Right ventricle myocardium superior (tissue), 1 donor: ENCODE measurements at regions of chr6 and their contacts with region 1.

Region 1: DNA sequence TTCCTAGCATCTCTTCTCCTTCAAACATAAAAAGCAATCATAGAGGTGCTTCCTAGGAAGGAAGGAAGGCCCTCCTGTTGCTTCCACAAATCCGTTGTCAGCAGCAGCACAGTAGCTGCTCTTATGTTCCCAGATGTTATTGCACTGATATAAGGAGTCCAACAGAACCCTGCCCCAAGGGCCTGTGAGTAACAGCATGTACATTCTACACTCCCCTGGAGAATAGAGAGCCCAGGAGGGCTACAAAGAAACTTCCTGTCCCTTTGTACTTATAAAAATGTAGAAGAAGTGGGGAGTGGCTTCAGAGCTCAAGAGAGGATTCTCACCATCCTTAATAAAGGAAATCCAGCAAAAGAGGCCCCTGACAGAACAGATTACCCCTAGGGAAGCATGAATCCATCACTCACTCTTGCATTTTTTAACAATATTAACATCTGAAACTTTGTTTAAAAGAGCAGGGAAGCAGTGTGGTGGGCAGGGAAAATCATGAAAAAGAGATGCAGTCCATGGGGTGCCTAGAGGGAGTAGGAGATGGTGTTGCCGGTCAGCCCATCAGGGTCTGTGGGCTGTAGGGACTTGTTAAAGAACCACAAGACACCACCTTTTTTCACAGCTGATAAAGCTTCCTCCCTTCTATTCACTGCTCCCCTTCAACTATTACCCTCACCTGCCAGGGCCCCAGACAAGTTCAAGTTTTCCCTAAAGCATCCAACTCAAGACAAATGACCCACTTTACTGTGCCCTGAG is 104.5 kb upstream of the ADGRF1 start:
- DNase-seq: no peak
- ATAC-seq: peak; percentile 69

Region 2: DNA sequence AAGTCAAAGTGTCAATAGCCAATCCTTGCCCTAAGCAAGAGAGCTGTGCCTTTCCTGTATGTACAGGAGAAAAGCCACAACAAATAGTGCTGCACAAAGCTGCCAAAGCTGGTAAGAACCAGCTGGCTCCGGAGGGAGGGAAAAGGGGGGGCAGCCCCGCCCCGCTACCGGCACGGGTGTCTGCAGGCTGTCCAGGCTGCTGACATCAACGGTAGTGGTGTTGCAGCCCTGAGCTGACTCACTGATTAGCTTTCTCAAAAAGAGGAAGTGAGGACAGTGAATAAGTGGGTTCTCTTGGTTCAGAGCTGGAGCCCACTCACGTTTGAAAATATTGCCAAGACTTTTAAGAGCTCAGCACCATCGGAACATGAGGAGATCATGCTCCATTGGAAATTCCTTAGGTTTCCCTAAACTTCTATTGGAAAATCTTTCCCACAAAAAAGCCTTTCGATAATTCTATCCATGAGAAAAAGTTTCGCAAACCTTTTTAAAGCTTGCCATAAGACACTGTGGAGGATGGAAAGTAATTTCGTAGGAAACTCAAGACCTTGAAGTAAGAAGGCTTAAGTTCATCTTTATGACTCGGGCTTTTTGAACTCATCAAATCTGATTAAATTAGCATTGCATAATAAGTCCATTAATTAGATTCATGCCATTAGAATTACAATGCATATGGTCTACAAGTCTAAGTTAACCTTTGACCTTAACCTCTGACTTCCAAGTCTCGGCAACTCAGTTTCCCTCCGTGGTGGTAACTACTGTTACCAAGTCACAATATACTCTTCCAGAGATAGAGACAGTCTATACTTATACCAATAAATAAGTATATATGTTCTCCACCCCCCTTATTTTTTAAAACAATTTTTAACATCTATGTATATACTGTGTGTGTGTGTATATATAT is 96.1 kb after region 1 on chr6:
- intact Hi-C with region 1: loop called (anchors 10 kb)
- DNase-seq: peak; percentile 92
- ATAC-seq: peak; percentile 96